ENCODE measurements at regions of chr2 and their contacts with region 1.

Region 1: GRCh38 chr2:112121682-112122254 is 16.4 kb upstream of the FBLN7 start:
- DNase-seq: peak; percentile 7
- H3K4me3 ChIP-seq: no peak overlapping the region
- H3K27ac ChIP-seq: no peak overlapping the region
- H3K4me1 ChIP-seq: no peaks in the 10 kb centered on the region
- H3K27me3 ChIP-seq: no peaks in the 10 kb centered on the region
- CTCF ChIP-seq: peak; percentile 40 to 59

Region 2: DNA sequence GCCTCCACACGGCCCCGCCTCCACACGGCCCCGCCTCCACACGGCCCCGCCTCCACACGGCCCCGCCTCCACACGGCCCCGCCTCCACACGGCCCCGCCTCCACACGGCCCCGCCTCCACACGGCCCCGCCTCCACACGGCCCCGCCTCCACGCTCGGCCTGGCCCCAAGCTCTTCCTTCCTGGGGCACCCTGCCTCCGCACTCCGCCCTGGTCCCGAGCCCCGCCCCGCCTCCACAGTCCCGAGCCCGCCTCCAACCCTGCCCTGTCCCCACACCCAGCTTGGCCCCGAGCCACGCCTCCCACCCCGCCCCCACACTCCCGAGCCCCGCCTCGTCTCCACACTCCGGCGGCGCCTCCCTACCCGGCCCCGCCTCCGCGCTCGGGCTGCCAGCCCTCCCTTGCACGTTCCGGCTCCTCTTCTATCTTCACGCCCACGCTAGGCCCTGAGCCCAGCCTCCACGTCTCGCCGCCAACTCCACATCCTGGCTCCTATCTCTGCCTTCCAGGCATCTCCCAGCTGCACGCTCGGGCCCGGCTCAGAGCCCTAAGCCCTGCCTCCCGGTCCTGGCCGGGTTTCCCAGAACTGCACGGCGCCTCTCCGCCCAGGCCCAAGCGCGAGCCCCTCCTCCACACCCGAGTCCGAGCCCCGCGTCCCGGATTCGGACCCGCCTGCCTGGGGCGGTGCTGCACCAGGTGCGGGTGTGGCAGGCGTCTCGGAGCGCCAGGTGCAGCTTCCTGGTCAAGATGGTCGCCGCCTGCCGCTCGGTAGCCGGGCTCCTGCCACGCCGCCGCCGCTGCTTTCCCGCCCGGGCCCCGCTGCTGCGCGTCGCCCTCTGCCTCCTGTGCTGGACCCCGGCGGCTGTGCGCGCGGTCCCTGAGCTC is 66.7 kb before region 1 on chr2 and contains the start of gene TMEM87B:
- CTCF ChIA-PET with region 1: no interaction called
- dilution Hi-C with region 1: no loop called
- in situ Hi-C with region 1: no loop called
- intact Hi-C with region 1: no loop called
- DNase-seq: peak; percentile 97
- H3K4me3 ChIP-seq: peak within 1 kb of the TSS; percentile 98 to 100 (median 100)
- H3K27ac ChIP-seq: peak within 1 kb of the TSS; percentile 81
- H3K4me1 ChIP-seq: peaks cover 21% of the 10 kb centered on the region
- H3K27me3 ChIP-seq: no peaks in the 10 kb centered on the region
- CTCF ChIP-seq: no peak
- total RNA-seq, gene TMEM87B: 35.0 to 51.7 TPM

Region 3: DNA sequence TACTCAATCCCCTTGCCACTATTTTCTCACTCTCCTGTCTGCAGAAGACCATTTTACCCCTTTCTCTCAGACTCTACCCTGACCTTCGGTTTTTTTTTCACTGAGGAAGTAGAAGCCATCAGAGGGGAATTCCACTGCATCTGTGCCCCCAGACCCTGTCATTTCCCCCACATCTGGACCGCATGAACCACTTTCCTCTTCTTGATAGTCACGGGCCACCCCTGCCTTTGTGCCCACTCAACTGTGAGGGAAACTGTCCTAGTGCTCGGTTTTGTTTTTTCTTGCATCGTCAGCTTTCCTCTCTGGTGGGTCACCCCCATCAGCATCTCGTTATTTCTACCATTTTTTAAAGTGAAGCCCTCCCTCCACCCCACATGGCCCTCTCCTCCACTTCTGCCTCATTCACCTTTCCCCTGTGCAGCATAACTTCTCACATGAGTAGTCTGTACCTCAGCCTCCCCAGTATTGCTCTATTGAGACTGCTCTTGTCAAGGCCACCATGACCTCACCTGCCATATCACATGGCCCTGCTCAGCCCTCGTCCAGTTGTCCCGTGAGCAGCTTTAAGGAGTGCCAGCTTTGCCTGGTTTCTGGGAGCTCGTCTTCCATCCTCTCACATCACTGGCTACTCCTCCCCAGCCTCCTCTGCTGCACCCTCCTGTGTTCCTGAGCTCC is 34.3 kb before region 1 on chr2:
- CTCF ChIA-PET with region 1: no interaction called
- dilution Hi-C with region 1: no loop called
- in situ Hi-C with region 1: no loop called
- intact Hi-C with region 1: no loop called
- DNase-seq: no peak
- H3K4me3 ChIP-seq: no peak overlapping the region
- H3K27ac ChIP-seq: no peak overlapping the region
- H3K4me1 ChIP-seq: no peaks in the 10 kb centered on the region
- H3K27me3 ChIP-seq: no peaks in the 10 kb centered on the region
- CTCF ChIP-seq: no peak

Region 4: DNA sequence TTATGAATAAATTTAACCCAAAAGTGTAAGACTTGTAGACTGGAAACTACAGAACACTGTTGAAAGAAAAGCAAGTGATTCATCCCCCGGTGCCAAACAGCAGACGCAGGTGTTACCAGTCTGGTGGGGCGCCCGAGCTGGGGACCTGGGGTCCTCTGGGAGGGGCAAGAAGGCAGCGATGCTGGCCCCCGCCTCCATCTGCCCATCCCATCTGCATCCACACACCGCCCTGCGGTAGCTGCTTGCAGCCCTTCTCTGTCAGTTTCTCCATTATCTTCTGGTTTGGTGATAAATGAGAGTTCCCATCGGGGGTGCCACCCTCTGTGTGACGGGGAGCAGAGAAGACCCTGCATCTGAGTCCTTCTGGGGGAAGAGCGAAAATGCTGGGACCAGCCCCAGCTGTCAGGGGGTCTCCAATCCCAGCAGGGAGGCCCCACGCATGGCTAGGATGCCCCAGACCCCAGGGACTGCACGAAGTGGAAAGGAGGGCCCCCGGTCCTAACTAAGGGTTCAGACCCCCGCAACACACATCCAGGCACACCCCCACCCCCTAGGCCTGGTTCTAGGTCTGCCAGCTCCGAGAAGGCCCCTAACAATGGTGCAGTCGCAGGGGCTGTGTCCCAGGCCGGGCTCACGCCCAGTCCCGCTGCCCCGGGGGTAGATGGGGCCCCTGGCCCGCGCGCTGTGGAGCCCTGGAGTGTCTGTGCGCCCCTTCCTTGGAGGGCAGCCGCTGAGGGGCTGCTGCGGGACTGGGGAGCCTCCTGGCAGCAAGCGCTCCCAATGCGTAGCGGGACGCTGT is 312.4 kb after region 1 on chr2:
- CTCF ChIA-PET with region 1: no interaction called
- dilution Hi-C with region 1: no loop called
- in situ Hi-C with region 1: no loop called
- intact Hi-C with region 1: loop called (anchors 1 kb)
- DNase-seq: no peak
- H3K4me3 ChIP-seq: no peak overlapping the region
- H3K27ac ChIP-seq: no peak overlapping the region
- H3K4me1 ChIP-seq: no peaks in the 10 kb centered on the region
- H3K27me3 ChIP-seq: no peaks in the 10 kb centered on the region
- CTCF ChIP-seq: no peak